Heart left ventricle (tissue), 16 donors: ENCODE measurements at regions of chr6 and their contacts with region 1.

Region 1: DNA sequence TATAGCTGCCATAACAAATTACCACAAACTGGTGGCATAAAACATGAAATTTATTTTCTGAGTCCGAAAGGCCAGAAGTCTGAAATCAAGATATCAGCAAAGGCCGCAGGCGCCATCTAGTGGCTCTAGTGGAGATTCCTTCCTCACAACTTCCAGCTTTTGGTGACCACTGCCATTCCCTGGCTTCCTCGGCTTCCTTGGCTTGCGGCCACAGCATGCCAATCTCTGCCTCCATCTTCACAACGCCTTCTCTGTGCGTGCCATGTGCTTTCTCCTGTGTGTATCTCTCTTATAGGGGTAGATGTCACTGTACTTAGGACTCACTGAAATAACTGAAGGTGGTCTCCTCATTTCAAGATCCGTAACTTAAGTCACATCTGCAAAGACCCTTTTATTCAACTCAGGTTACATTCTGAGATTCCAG is 5.4 kb upstream of the PLAGL1 start:
- DNase-seq: peak; percentile 67 to 80 (median 72)
- ATAC-seq: peak in 3 of 4 donors; percentile 36 to 64 (median 54)
- H3K4me3 ChIP-seq: no peak overlapping the region
- H3K27ac ChIP-seq: no peak overlapping the region
- H3K4me1 ChIP-seq: peaks cover 0 to 7% (median 0%) of the 10 kb centered on the region in 12 donors
- H3K27me3 ChIP-seq: peaks cover 0 to 4% (median 0%) of the 10 kb centered on the region in 9 donors
- CTCF ChIP-seq: peak; percentile 87 to 98 (median 92)
- POLR2A ChIP-seq: no peak

Region 2: GRCh38 chr6:143575440-143575839 is 438.1 kb before region 1 on chr6:
- intact Hi-C with region 1: loop called (anchors 1 to 2 kb)
- DNase-seq: peak in 2 of 5 donors; percentile 57 to 60
- ATAC-seq: peak; percentile 55 to 91 (median 88)
- H3K4me3 ChIP-seq: no peak overlapping the region
- H3K27ac ChIP-seq: peak overlapping the region in 3 of 12 donors; percentile 35 to 60 (median 49)
- H3K4me1 ChIP-seq: peaks cover 0 to 5% (median 0%) of the 10 kb centered on the region in 12 donors
- H3K27me3 ChIP-seq: no peaks in the 10 kb centered on the region
- CTCF ChIP-seq: peak; percentile 80 to 96 (median 92)
- POLR2A ChIP-seq: no peak

Region 3: DNA sequence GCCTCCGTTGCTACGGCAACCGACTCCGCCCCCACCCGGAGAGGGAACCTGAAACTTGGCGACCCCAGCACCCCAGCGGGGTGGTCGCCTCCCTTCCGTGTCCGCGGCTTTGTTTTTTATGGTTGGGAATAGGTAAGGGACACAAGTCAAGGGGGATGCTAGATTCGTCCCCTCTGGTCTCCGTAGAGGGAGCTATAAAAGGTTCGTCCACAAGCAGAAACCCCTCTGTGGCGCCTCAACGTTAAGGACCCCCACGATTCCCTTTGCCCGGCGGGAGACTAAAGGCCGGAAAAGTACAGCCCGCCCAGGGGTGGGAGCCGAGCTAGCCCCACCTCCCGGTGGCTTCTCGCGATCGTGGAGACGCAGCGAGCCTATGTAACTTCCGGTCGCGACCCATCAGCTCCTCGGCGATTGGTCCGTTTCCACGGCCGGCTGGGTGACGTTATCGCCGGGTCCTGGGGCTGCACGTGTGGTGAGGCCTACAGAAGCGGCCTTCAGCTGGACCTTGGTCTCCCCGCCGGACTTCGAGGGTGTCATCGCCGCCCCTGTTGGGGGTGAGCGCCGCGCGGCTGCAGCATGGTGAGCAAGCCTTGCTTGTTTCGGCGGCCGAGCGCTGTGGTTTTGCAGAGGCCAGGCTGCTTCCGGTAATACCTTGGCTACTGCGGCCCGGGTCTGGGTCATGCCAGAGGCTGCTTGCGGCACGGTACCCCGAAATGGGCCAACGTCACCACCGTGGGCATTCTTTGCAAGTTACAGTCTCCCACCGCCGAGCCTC is 170.4 kb before region 1 on chr6 and contains the start of gene LTV1:
- intact Hi-C with region 1: loop called in 6 of 10 experiments (anchors 5 to 10 kb)
- DNase-seq: peak; percentile 97 to 98 (median 97)
- ATAC-seq: peak; percentile 100
- H3K4me3 ChIP-seq: peak within 1 kb of the TSS; percentile 55 to 94 (median 82)
- H3K27ac ChIP-seq: peak within 1 kb of the TSS; percentile 80 to 96 (median 93)
- H3K4me1 ChIP-seq: peaks cover 0 to 18% (median 11%) of the 10 kb centered on the region in 12 donors
- H3K27me3 ChIP-seq: no peaks in the 10 kb centered on the region
- CTCF ChIP-seq: peak in 4 of 12 donors; percentile 3 to 27 (median 20)
- POLR2A ChIP-seq: peak in 1 of 2 donors; percentile 83
- total RNA-seq, gene LTV1: 9.8 to 16.5 (median 12.9) TPM

Region 4: GRCh38 chr6:143949535-143949934 is 64.0 kb before region 1 on chr6:
- intact Hi-C with region 1: loop called in 5 of 10 experiments (anchors 5 to 10 kb)
- DNase-seq: no peak
- ATAC-seq: no peak
- H3K4me3 ChIP-seq: no peak overlapping the region
- H3K27ac ChIP-seq: no peak overlapping the region
- H3K4me1 ChIP-seq: no peaks in the 10 kb centered on the region
- H3K27me3 ChIP-seq: no peaks in the 10 kb centered on the region
- CTCF ChIP-seq: no peak
- POLR2A ChIP-seq: no peak

Region 5: GRCh38 chr6:144195679-144196270 is 182.3 kb after region 1 on chr6:
- intact Hi-C with region 1: no loop called
- DNase-seq: no peak
- ATAC-seq: no peak
- H3K4me3 ChIP-seq: no peak overlapping the region
- H3K27ac ChIP-seq: no peak overlapping the region
- H3K4me1 ChIP-seq: peaks cover 0 to 4% (median under 1%) of the 10 kb centered on the region in 12 donors
- H3K27me3 ChIP-seq: no peaks in the 10 kb centered on the region
- CTCF ChIP-seq: no peak
- POLR2A ChIP-seq: no peak

Region 6: DNA sequence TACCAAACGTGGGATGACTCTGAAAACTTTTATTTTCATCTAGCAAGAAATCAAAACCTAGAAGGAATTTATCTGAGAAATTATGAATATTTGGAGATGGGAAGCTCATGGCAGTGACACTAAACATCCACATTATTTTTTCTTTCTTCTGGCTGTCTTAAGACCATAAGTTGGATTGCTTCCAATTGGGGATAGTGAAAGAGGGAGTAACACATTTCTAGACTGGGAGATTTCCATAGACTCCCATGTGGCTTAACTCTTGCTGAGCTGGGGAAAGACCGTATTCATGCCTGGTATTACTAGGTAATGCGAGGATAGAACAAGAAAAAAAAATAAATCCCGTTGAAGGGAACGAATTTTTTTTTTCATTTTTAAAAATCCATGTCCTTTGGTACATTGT is 391.7 kb after region 1 on chr6:
- intact Hi-C with region 1: no loop called
- DNase-seq: no peak
- ATAC-seq: peak in 2 of 4 donors; percentile 45 to 47
- H3K4me3 ChIP-seq: no peak overlapping the region
- H3K27ac ChIP-seq: peak overlapping the region in 1 of 12 donors; percentile 2
- H3K4me1 ChIP-seq: peaks cover 0 to 72% (median 46%) of the 10 kb centered on the region in 12 donors
- H3K27me3 ChIP-seq: no peaks in the 10 kb centered on the region
- CTCF ChIP-seq: no peak
- POLR2A ChIP-seq: no peak